ENCODE measurements at regions of chr19 and their contacts with region 1.

Region 1: DNA sequence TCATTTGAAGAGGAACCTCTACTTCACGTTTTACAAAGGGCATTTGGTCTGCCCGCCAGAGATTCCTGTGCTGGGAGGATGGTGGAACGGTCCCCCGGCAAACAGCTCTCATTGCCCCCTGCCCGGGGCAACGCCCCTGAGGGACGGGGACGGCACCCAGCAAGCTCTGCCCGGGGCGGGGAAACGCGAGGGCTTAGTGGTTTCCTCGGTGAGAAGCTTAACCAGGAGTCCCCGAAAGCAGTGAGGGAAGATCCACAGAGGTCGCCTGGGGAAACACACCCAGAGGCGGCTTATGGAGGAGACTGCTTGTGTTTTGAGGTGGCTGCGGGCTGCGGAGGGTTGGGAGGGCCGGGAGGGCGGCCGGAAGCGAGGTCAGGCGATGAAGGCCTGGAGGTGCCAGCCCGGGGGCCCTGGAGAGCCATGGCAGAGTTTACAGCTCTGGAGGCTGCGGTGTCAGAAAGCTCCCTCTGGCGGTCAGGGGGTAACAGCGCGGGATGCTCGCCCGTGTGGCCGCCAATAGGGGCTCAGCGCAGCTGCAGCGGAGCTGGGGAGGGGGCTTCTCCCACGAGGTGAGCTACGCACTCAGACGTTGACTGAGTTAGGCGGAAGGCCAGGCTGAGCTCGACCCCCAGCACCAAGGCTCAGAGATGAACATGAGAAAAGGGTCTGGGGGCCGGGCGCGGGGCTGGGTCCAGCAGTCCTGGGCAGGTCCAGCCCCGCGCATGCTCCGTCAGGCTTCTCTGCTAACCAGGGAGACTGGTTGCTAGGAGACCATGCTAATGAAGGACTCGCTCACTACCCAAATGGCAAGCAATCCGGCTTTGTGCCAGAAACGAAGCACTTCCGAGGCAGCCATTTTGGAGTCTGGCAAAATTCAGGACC is 652 bp upstream of the TPGS1 start:
- DNase-seq: peak; percentile 95 to 98
- H3K4me3 ChIP-seq: peak overlapping the region; percentile 80
- H3K4me3 Mint-ChIP-seq: peak overlapping the region; percentile 82
- H3K27ac Mint-ChIP-seq: peak overlapping the region; percentile 99
- H3K4me1 ChIP-seq: peaks cover 10% of the 10 kb centered on the region; the same call in 1 of the 2 replicates
- H3K4me1 Mint-ChIP-seq: peaks cover 8% of the 10 kb centered on the region
- H3K27me3 ChIP-seq: no peaks in the 10 kb centered on the region
- H3K27me3 Mint-ChIP-seq: no peaks in the 10 kb centered on the region
- CTCF ChIP-seq: peak; percentile 85 to 97

Region 2: GRCh38 chr19:488505-489417 is 17.9 kb before region 1 on chr19:
- CTCF ChIA-PET with region 1: interaction called, 13 read pairs
- POLR2A ChIA-PET with region 1: interaction called, 8 read pairs
- intact Hi-C with region 1: loop called (anchors 1 kb)
- DNase-seq: peak; percentile 92 to 97
- H3K4me3 ChIP-seq: peak overlapping the region; percentile 56
- H3K4me3 Mint-ChIP-seq: peak overlapping the region; percentile 72
- H3K27ac Mint-ChIP-seq: peak overlapping the region; percentile 55
- H3K4me1 ChIP-seq: peaks cover 5% of the 10 kb centered on the region; the same call in 1 of the 2 replicates
- H3K4me1 Mint-ChIP-seq: peaks cover 5% of the 10 kb centered on the region
- H3K27me3 ChIP-seq: no peaks in the 10 kb centered on the region
- H3K27me3 Mint-ChIP-seq: no peaks in the 10 kb centered on the region
- CTCF ChIP-seq: no peak

Region 3: GRCh38 chr19:531009-531752 is 24.5 kb after region 1 on chr19:
- CTCF ChIA-PET with region 1: interaction called, 28 read pairs
- POLR2A ChIA-PET with region 1: interaction called, 9 read pairs
- intact Hi-C with region 1: loop called (anchors 2 kb)
- DNase-seq: peak; percentile 91 to 95
- H3K4me3 ChIP-seq: peak overlapping the region; percentile 94
- H3K4me3 Mint-ChIP-seq: peak overlapping the region; percentile 82
- H3K27ac Mint-ChIP-seq: peak overlapping the region; percentile 72
- H3K4me1 ChIP-seq: peaks cover 30% of the 10 kb centered on the region
- H3K4me1 Mint-ChIP-seq: peaks cover 6% of the 10 kb centered on the region
- H3K27me3 ChIP-seq: no peaks in the 10 kb centered on the region
- H3K27me3 Mint-ChIP-seq: no peaks in the 10 kb centered on the region
- CTCF ChIP-seq: peak in 1 of 2 experiments; percentile 6